PC-3 (cell line): ENCODE measurements at regions of chr10 and their contacts with region 1.

Region 1: GRCh38 chr10:131885391-131886161 is 15.2 kb upstream of the PPP2R2D start:
- DNase-seq: peak; percentile 73
- ATAC-seq: peak; percentile 86
- H3K4me3 ChIP-seq: no peak overlapping the region
- H3K27ac ChIP-seq: no peak overlapping the region
- H3K4me1 ChIP-seq: peaks cover 16% of the 10 kb centered on the region
- H3K27me3 ChIP-seq: no peaks in the 10 kb centered on the region
- CTCF ChIP-seq: peak; percentile 86

Region 2: DNA sequence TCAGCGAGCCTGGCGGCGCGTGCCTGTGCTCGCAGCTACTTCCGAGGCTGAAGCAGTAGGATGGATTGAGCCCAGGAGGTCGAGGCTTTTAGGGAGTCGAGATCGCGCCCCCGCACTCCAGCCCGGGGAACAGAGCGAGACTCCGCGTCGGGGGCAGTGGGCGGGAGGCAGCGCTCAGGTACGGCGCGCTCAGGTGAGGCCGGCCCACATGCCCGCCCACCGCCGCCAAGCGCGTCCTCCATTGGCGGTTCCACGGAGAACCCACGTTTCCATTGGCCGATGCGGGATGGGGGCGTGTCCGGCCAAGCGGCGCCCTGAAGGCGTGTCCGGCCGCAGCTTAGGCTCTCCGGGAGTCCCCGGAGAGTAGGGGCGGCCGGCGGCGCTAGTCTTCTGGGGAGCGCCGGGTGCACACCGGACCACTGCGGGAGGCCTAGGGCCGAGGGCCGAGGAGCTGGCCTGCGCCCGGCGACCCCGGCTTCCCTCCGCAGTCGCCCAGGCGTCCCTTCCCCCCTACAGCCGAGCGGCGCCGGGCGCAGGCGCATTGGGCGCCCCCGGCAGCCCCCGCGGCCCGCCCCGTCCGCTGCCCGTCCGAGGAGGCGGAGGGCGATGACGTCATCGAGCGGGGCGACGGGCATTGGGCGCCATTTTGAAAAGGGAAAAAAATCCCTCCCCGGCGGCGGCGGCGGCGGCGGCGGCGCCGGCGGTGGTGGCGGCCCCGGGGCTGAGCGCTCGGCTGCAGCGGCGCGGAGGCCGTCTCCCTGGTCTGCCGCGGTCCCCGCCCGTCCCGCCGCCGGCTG is 15.0 kb after region 1 on chr10 and contains the start of gene PPP2R2D:
- CTCF ChIA-PET with region 1: no interaction called
- POLR2A ChIA-PET with region 1: no interaction called
- intact Hi-C with region 1: loop called (anchors 1 kb)
- DNase-seq: peak; percentile 90
- ATAC-seq: peak; percentile 89
- H3K4me3 ChIP-seq: peak within 1 kb of the TSS; percentile 77
- H3K27ac ChIP-seq: peak within 1 kb of the TSS; percentile 36; the same call in 1 of the 2 replicates
- H3K4me1 ChIP-seq: peaks cover 25% of the 10 kb centered on the region
- H3K27me3 ChIP-seq: no peaks in the 10 kb centered on the region
- CTCF ChIP-seq: no peak
- total RNA-seq, gene PPP2R2D: 30.6 and 40.3 TPM in 2 replicates

Region 3: GRCh38 chr10:131943021-131943814 is 57.6 kb after region 1 on chr10:
- CTCF ChIA-PET with region 1: interaction called, 13 read pairs
- POLR2A ChIA-PET with region 1: no interaction called
- intact Hi-C with region 1: loop called (anchors 1 kb)
- DNase-seq: peak; percentile 20
- ATAC-seq: no peak
- H3K4me3 ChIP-seq: no peak overlapping the region
- H3K27ac ChIP-seq: no peak overlapping the region
- H3K4me1 ChIP-seq: peaks cover 43% of the 10 kb centered on the region
- H3K27me3 ChIP-seq: no peaks in the 10 kb centered on the region
- CTCF ChIP-seq: peak; percentile 60

Region 4: GRCh38 chr10:131981429-131982184 is 96.0 kb after region 1 on chr10 and contains the start of gene BNIP3:
- CTCF ChIA-PET with region 1: no interaction called
- POLR2A ChIA-PET with region 1: no interaction called
- intact Hi-C with region 1: loop called (anchors 5 kb)
- DNase-seq: peak; percentile 92
- ATAC-seq: peak; percentile 74
- H3K4me3 ChIP-seq: peak within 1 kb of the TSS; percentile 92
- H3K27ac ChIP-seq: no peak within 1 kb of the TSS
- H3K4me1 ChIP-seq: peaks cover 34% of the 10 kb centered on the region
- H3K27me3 ChIP-seq: no peaks in the 10 kb centered on the region
- CTCF ChIP-seq: 0 out of 2 replicates have a peak, but pooled peaks have one; percentile 13
- total RNA-seq, gene BNIP3: 197 and 225 TPM in 2 replicates

Region 5: GRCh38 chr10:132023092-132023811 is 137.7 kb after region 1 on chr10:
- CTCF ChIA-PET with region 1: interaction called, 4 read pairs
- POLR2A ChIA-PET with region 1: no interaction called
- intact Hi-C with region 1: loop called (anchors 1 kb)
- DNase-seq: peak; percentile 77
- ATAC-seq: peak; percentile 91
- H3K4me3 ChIP-seq: peak overlapping the region; percentile 69
- H3K27ac ChIP-seq: no peak overlapping the region
- H3K4me1 ChIP-seq: 0 out of 2 replicates have a peak, but pooled peaks cover 5% of the 10 kb centered on the region
- H3K27me3 ChIP-seq: peaks cover 36% of the 10 kb centered on the region
- CTCF ChIP-seq: peak; percentile 82